Tibial artery (tissue), 4 donors: ENCODE measurements at regions of chr19 and their contacts with region 1.

Region 1: DNA sequence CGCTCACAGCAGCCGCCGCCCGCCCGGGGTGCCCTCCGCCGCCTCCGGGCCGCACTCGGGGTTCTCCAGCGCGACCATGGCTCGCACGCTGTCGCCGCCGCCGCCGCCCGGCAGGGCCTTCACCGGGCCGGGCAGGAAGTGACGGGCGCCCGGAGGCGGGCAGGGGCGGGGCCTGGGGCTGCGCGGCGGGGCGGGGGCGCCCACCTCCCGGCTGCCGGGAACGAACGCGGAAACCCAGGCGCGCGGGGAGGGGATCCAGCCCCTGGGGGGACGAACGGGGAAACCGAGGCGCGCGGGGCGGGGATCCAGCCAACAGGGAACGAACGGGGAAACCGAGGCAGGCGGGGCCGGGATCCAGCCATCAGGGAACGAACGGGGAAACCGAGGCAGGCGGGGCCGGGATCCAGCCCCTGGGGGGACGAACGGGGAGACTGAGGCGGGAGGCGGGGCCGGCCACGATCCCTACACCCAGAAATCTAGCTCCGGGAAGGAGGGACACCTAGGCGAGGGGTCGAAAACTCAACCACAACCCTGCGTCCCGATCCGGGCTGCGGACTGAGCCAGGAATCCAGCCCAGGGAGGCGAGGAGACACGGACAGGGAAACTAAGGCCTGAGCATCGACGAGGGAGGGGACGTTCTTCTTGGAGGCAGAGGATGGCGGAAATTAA is at the start of gene R3HDM4:
- DNase-seq: peak; percentile 63 to 88
- H3K4me3 ChIP-seq: peak within 1 kb of the TSS; percentile 86 to 98
- H3K27ac ChIP-seq: peak within 1 kb of the TSS; percentile 92 to 93
- H3K4me1 ChIP-seq: peaks cover 0 to 38% (median 26%) of the 10 kb centered on the region in 4 donors
- H3K27me3 ChIP-seq: peaks cover 0 to 19% of the 10 kb centered on the region in 2 donors
- CTCF ChIP-seq: no peak

Region 2: DNA sequence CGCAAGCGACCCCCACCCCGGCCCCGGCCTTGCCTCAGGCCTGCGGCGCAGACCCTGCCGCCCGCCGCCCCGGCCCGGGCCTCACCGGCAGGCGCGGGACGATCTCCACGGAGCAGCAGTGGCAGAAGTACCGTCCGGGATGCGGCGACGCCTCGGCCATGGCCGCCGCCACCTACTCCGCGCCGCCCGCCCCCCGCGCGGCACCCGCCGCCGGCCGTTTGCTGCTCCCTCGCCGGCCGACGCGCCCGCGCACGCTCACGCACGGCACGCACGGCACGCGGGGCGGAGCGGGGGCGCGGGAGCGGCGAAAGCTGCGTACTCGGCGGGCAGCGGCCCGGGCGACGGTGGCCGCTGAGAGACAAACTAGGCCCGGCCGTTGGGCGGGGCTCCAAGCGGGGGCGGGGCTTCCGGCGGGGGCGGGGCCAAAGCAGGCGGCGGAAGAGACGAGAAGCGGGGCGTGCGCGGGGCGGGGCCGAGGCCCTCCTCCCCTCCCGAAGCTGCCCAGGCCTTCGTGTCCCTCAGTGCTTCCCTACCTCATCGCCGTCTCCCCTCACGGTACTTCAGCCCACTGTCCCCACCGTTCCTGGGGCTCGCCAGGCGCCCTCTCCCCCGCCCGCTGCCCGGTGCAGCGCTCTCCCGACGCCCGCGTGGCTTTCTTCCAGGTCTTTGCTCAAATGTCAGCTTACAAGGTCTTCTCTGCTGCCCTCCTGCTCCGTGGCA is 250.1 kb before region 1 on chr19 and contains the start of gene RNF126:
- intact Hi-C with region 1: loop called (anchors 5 kb)
- DNase-seq: peak; percentile 87 to 97
- H3K4me3 ChIP-seq: peak within 1 kb of the TSS; percentile 79 to 88
- H3K27ac ChIP-seq: peak within 1 kb of the TSS; percentile 88 to 92
- H3K4me1 ChIP-seq: peaks cover 0 to 62% (median 56%) of the 10 kb centered on the region in 4 donors
- H3K27me3 ChIP-seq: no peaks in the 10 kb centered on the region
- CTCF ChIP-seq: peak in 1 of 2 experiments; percentile 14

Region 3: GRCh38 chr19:771332-771785 is 141.9 kb before region 1 on chr19:
- intact Hi-C with region 1: loop called (anchors 5 kb)
- DNase-seq: no peak
- H3K4me3 ChIP-seq: no peak overlapping the region
- H3K27ac ChIP-seq: no peak overlapping the region
- H3K4me1 ChIP-seq: peaks cover 0 to 10% (median 4%) of the 10 kb centered on the region in 4 donors
- H3K27me3 ChIP-seq: peaks cover 0 to 21% of the 10 kb centered on the region in 2 donors
- CTCF ChIP-seq: peak in 1 of 2 experiments; percentile 33

Region 4: DNA sequence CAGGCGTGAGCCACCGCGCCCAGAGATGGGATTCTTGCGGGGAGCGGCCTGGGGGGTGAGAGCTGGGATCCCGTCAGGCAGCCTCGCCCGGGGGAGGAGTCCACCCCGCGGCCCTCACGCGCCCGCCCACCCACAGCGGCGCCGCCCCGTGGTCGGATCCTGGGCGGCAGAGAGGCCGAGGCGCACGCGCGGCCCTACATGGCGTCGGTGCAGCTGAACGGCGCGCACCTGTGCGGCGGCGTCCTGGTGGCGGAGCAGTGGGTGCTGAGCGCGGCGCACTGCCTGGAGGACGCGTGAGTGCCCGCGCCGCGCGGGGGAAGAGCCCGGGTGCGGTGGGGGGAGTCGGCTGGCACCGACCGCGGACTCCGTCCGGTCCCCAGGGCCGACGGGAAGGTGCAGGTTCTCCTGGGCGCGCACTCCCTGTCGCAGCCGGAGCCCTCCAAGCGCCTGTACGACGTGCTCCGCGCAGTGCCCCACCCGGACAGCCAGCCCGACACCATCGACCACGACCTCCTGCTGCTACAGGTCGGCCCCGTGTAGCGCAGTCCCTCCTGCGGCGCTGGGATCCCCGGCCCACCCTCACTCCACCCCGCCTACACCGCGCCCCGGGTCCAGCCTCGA is 52.6 kb before region 1 on chr19:
- intact Hi-C with region 1: loop called (anchors 5 kb)
- DNase-seq: peak; percentile 77 to 84
- H3K4me3 ChIP-seq: peak overlapping the region; percentile 37 to 43
- H3K27ac ChIP-seq: no peak overlapping the region
- H3K4me1 ChIP-seq: peaks cover 0 to 31% (median 18%) of the 10 kb centered on the region in 4 donors
- H3K27me3 ChIP-seq: peaks cover 0 to 58% of the 10 kb centered on the region in 2 donors
- CTCF ChIP-seq: no peak

Region 5: DNA sequence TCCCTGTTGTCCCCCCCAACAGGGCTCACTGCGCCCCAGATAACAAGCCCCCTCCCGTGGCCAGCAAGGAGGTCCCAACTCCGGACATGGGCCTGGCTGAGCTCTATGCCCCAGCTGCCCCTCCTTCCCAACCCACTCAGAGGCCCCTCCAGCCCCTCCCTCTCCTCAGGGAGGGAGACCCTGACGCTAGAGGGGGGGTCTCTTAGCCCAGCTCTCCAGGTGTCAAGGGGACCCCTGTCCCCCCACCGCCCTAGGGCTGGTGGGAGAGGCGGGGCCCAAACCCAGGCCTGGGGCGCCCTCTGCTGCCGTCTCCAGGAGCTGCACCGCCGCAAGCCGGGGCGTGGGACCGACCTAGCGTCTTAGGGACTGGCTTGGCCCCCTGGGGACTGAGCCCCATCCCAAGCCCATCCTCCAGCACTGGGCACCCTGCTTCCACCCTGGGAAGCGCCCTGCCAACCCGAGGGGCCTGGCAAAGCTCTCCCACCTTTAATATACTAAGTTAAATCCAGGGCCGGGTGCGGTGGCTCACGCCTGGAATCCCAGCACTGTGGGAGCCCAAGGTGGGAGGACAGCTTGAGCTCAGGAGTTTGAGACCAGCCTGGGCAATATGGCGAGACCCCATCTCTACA is 88.4 kb after region 1 on chr19:
- intact Hi-C with region 1: no loop called
- DNase-seq: no peak
- H3K4me3 ChIP-seq: no peak overlapping the region
- H3K27ac ChIP-seq: no peak overlapping the region
- H3K4me1 ChIP-seq: peaks cover 0 to 22% (median 10%) of the 10 kb centered on the region in 4 donors
- H3K27me3 ChIP-seq: peaks cover 0 to 74% of the 10 kb centered on the region in 2 donors
- CTCF ChIP-seq: peak; percentile 85 to 93